Endothelial cell of umbilical vein (primary cell): ENCODE measurements at regions of chr5 and their contacts with region 1.

Region 1: DNA sequence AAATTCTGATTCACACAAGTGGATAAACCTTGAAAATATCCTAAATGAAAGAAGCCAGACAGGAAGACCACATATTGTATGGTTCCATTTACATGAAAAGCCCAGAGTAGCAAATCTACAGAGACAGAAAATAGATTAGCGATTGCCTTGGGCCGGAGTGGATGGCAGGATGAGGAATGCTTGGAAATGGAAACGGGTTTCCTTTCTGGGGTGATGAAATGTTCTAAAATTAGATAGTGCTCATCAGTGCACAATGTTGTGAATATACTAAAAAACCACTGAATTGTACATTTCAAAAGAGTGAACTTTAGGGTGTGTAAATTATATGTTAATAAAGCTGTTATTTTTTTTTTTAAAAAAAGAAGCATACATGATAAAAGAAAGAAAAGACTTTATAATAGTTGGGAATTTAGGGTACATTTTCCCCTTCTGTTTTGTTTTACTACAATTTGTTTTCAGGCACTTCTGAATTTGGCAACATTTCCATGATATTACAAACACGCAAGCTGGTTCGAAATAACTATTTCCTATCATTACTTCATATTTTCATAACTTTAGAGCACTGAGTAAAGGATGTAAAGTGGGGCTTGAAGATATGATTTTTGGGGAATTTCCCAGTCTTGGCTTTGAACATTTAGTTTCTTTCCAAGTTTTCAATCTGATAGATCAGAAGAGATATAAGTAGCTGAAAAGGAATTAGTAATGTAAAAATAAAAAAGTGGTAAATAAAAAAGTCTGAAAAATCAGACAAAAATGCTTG is 23.9 kb downstream of the SLC35A4 start:
- DNase-seq: peak; percentile 61
- H3K4me3 ChIP-seq: no peak overlapping the region
- H3K27ac ChIP-seq: peak overlapping the region; percentile 22
- H3K4me1 ChIP-seq: peaks cover 23% of the 10 kb centered on the region
- H3K27me3 ChIP-seq: no peaks in the 10 kb centered on the region
- CTCF ChIP-seq: no peak
- POLR2A ChIP-seq: no peak

Region 2: GRCh38 chr5:140575309-140575708 is 13.2 kb before region 1 on chr5:
- CTCF ChIA-PET with region 1: interaction called, 10 read pairs
- POLR2A ChIA-PET with region 1: no interaction called
- dilution Hi-C with region 1: no loop called
- intact Hi-C with region 1: no loop called
- DNase-seq: peak; percentile 41
- H3K4me3 ChIP-seq: no peak overlapping the region
- H3K27ac ChIP-seq: no peak overlapping the region
- H3K4me1 ChIP-seq: peaks cover 7% of the 10 kb centered on the region
- H3K27me3 ChIP-seq: peaks cover 0 to 2% of the 10 kb centered on the region in 2 experiments
- CTCF ChIP-seq: peak; percentile 56 to 57
- POLR2A ChIP-seq: no peak

Region 3: DNA sequence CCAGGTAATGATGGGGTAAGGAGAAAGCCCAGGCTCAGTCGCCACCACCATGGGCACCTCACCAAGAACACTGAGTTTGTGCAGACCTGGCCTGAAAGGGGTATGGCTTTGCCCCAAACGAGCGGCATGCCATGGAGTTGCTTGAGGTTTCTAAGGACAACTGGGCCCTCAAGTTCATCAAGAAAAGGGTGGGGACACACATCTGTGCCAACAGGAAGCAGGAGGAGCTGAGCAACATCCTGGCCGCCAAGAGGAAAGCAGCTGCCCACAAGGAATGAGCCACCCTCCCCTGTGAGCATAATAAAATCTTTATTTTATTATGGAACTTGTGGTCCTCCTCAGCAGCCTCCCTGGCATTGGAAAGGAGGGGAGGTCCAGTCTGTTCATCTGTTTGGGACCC is 20.6 kb after region 1 on chr5:
- CTCF ChIA-PET with region 1: interaction called, 3 read pairs
- POLR2A ChIA-PET with region 1: no interaction called
- dilution Hi-C with region 1: no loop called
- intact Hi-C with region 1: loop called (anchors 2 kb)
- DNase-seq: peak; percentile 62
- H3K4me3 ChIP-seq: no peak overlapping the region
- H3K27ac ChIP-seq: peak overlapping the region; percentile 21
- H3K4me1 ChIP-seq: peaks cover 23% of the 10 kb centered on the region
- H3K27me3 ChIP-seq: no peaks in the 10 kb centered on the region
- CTCF ChIP-seq: no peak
- POLR2A ChIP-seq: no peak

Region 4: DNA sequence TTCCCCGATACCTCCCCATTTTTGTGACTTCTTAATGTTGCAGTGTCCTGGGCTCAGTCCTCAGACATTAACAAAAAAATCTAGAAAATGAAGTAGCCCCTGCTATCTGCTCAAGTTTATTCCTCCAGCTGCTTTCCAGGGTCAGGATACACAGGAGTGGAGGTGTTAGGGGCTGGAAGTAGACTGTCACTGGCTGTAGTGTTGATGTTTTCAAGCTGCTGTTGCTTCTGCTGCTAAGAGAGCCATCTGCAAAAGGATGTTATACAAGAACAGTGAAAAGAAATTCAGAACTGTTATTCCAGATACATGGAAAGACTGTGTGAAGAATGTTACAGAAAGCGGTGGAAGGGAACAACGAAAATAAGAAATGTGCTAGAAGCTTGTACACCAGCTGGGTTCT is 33.8 kb after region 1 on chr5:
- CTCF ChIA-PET with region 1: no interaction called
- POLR2A ChIA-PET with region 1: no interaction called
- dilution Hi-C with region 1: no loop called
- intact Hi-C with region 1: no loop called
- DNase-seq: no peak
- H3K4me3 ChIP-seq: no peak overlapping the region
- H3K27ac ChIP-seq: no peak overlapping the region
- H3K4me1 ChIP-seq: no peaks in the 10 kb centered on the region
- H3K27me3 ChIP-seq: peaks cover 9 to 12% of the 10 kb centered on the region in 2 experiments
- CTCF ChIP-seq: no peak
- POLR2A ChIP-seq: no peak

Region 5: DNA sequence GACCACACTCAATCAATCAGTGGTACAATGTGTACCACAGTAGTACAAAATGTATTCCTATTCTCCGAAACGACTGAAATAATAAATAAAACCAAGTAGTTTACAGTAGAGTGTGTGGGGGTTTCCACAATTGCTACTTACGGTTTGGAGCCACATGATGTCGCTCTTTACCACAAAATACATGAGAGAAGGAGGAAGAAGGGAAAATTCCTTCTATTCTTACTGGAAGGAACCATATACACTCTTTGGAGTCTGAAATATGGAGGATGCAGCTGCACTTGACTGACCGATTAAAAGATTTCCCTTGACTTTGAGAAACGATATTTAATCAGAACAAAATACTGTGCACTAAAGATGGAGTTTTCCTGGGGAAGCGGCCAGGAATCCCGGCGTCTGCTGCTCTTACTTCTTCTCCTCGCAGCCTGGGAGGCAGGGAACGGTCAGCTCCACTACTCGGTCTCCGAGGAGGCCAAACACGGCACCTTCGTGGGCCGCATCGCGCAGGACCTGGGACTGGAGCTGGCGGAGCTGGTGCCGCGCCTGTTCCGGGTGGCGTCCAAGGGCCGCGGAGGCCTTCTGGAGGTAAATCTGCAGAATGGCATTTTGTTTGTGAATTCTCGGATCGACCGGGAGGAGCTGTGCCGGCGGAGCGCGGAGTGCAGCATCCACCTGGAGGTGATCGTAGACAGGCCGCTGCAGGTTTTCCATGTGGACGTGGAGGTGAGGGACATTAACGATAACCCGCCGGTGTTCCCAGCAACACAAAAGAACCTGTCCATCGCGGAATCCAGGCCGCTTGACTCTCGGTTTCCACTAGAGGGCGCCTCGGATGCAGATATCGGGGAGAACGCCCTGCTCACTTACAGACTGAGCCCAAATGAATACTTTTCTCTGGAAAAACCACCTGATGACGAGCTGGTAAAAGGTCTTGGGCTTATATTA is 218.6 kb after region 1 on chr5 and contains the start of gene PCDHA4:
- CTCF ChIA-PET with region 1: no interaction called
- POLR2A ChIA-PET with region 1: no interaction called
- dilution Hi-C with region 1: no loop called
- intact Hi-C with region 1: no loop called
- DNase-seq: peak; percentile 12
- H3K4me3 ChIP-seq: no peak within 1 kb of the TSS
- H3K27ac ChIP-seq: no peak within 1 kb of the TSS
- H3K4me1 ChIP-seq: no peaks in the 10 kb centered on the region
- H3K27me3 ChIP-seq: no peaks in the 10 kb centered on the region
- CTCF ChIP-seq: peak; percentile 43 to 53
- POLR2A ChIP-seq: no peak
- total RNA-seq, gene PCDHA4: 0.04 and 0.14 TPM in 2 replicates

Region 6: DNA sequence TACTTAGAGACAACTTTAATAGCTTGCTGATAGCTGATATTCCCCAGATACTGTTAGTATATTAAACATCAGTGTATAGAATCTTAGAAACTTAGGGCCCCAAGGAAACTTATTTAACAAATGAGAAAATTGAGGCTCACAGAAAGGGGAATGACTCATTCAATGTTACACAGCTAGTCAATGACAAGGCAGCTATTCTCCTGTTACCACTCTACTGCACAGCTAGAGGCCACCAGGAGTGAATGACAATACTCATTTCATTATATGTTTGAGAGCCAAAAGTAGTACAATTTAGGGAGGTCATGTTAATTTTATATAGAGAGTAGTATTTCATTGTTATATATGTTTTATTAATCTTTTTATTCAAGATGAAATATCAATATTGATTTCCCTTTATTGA is 429.5 kb after region 1 on chr5:
- CTCF ChIA-PET with region 1: no interaction called
- POLR2A ChIA-PET with region 1: no interaction called
- dilution Hi-C with region 1: no loop called
- intact Hi-C with region 1: no loop called
- DNase-seq: no peak
- H3K4me3 ChIP-seq: no peak overlapping the region
- H3K27ac ChIP-seq: no peak overlapping the region
- H3K4me1 ChIP-seq: no peaks in the 10 kb centered on the region
- H3K27me3 ChIP-seq: peaks cover 0 to 2% of the 10 kb centered on the region in 2 experiments
- CTCF ChIP-seq: no peak
- POLR2A ChIP-seq: no peak